HEK293 (cell line): ENCODE measurements at regions of chr22 and their contacts with region 1.

Region 1: GRCh38 chr22:20238536-20238900 is 29.6 kb downstream of the RTN4R start:
- H3K4me3 ChIP-seq: no peak overlapping the region; the same call in 1 of the 2 replicates
- H3K27ac ChIP-seq: peak overlapping the region; percentile 65
- H3K4me1 ChIP-seq: peaks cover 14% of the 10 kb centered on the region
- CTCF ChIP-seq: peak; percentile 95

Region 2: GRCh38 chr22:20033045-20033706 is 205.3 kb before region 1 on chr22:
- CTCF ChIA-PET with region 1: no interaction called
- POLR2A ChIA-PET with region 1: no interaction called
- H3K4me3 ChIP-seq: no peak overlapping the region
- H3K27ac ChIP-seq: no peak overlapping the region
- H3K4me1 ChIP-seq: no peaks in the 10 kb centered on the region
- CTCF ChIP-seq: no peak

Region 3: DNA sequence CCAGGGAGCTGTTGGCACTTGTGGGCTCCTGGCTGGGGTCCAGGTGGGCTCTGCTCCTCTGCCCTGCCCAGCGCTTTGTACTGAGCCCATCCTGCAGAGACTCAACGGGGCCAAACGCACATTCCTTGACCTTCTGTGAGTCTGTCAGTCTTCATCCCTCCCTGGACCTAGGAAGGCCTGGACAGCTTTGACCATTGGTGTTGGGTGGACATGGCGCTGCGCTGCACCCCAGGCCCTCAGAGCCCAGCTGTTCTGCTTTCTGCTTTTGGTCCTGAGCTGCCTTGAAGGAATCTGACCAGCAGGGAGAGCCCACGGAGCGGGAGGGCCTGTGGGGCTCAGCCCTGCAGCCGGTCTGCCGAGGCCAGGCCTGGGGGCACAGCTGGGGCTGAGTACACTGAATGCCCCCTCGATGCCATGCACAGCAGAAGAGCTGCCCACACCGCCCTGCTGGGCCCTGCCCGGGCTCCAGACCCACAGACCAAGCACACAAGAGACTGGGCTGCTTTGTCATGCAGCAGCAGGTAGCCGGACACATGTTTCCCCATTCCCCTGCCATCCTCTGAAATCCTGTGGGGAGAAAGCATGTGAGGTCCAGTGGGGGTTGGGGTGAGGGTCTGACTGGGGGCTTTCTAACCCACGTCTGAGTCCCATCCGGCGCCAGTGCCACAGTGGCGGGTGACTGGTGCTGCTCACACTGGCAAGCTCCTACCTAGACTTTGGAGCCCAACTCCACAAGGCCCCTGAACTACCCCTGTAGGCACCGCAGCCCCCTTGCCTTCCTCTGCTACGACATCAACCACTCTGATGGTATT is 63.5 kb before region 1 on chr22:
- CTCF ChIA-PET with region 1: interaction called, 12 read pairs
- POLR2A ChIA-PET with region 1: no interaction called
- H3K4me3 ChIP-seq: no peak overlapping the region
- H3K27ac ChIP-seq: no peak overlapping the region
- H3K4me1 ChIP-seq: peaks cover 2% of the 10 kb centered on the region; the same call in 1 of the 2 replicates
- CTCF ChIP-seq: peak; percentile 61

Region 4: DNA sequence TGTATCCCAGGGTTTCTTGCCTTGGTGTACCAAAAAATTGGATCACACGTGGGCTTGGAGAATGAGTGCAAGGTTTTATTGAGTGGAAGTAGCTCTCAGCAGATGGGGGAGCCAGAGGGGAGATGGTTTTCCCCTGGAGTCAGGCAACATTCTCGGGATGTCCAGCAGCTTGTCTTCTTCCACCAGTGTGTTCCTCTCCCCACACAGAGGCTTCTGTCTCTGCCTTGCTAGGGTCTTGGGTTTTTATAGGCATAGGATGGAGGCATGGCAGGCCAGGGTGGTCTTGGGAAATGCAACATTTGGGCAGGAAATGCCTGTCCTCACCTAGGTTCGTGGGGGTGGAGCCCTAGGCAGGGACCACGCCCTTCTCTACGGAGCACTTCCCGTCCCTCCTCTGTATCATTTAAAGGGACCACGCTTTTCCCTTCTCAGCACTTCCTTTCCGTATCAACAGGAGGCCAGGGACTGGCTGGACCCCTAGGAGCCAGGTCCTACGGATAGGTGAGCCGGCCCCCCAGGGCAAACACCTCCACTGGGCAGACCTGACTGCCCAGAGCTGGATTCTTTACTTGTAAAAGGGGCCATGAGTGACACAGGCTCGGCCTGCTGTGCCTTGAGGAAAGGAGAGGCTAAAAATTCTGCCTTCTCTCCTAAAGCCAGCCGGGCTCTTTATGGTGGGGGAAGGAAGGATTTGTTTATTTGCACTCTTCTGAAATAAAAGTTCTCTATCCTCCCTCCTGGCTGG is 32.4 kb before region 1 on chr22:
- CTCF ChIA-PET with region 1: interaction called, 11 read pairs
- POLR2A ChIA-PET with region 1: interaction called, 4 read pairs
- H3K4me3 ChIP-seq: peak overlapping the region; percentile 53
- H3K27ac ChIP-seq: peak overlapping the region; percentile 68
- H3K4me1 ChIP-seq: no peaks in the 10 kb centered on the region
- CTCF ChIP-seq: no peak

Region 5: GRCh38 chr22:20249797-20250354 is 11.4 kb after region 1 on chr22:
- CTCF ChIA-PET with region 1: interaction called, 14 read pairs
- POLR2A ChIA-PET with region 1: interaction called, 4 read pairs
- H3K4me3 ChIP-seq: no peak overlapping the region
- H3K27ac ChIP-seq: no peak overlapping the region
- H3K4me1 ChIP-seq: 0 out of 2 replicates have a peak, but pooled peaks cover 2% of the 10 kb centered on the region
- CTCF ChIP-seq: no peak